ENCODE measurements at regions of chr5 and their contacts with region 1.

Region 1: DNA sequence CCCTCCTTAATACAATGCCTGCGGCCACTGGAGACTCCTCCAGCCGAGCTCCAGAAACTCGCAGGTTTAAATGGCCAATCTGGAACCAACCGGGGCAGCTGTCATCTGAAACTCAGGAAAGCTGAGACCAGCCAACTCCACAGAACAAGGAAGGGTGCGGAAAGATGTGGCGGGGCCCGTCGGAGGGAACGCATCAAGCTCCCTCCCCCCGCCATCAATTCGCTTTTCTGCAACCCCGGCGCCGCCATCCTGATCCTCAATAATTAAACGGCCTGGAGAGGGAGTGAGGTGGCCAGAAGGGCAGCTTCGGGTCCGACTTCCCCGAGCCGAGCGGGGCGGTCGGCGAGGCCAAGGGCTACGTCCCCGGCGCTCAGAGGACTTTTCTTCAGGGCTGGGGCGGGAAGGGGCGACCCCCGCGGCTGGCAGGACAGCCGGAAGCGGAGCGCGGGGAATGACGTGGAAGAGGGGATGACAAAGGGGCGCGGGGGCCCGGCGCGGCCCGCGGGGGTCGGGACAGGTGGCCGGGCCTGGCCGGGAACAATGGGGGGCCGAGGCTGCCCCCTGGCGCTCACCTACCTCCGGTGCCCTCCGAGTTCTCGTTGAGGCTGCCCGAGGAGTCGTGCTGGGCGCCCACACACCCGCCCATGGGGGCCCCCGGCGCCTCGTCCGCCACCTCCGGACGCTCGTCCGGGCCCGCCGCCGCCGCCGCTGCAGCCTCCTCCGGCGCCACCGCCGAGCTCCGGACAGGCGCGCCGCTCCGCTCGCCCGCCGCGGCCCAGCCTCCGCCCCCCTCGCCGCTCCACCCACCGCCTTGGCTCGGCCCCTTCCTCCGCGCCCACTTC is at the start of gene UBTD2:
- DNase-seq: peak; percentile 84
- ATAC-seq: peak; percentile 85
- H3K4me3 Mint-ChIP-seq: peak within 1 kb of the TSS; percentile 85
- H3K27ac Mint-ChIP-seq: peak within 1 kb of the TSS; percentile 87
- H3K4me1 Mint-ChIP-seq: peaks cover 16% of the 10 kb centered on the region
- H3K27me3 Mint-ChIP-seq: no peaks in the 10 kb centered on the region
- total RNA-seq, gene UBTD2: 6.0 to 6.1 TPM

Region 2: DNA sequence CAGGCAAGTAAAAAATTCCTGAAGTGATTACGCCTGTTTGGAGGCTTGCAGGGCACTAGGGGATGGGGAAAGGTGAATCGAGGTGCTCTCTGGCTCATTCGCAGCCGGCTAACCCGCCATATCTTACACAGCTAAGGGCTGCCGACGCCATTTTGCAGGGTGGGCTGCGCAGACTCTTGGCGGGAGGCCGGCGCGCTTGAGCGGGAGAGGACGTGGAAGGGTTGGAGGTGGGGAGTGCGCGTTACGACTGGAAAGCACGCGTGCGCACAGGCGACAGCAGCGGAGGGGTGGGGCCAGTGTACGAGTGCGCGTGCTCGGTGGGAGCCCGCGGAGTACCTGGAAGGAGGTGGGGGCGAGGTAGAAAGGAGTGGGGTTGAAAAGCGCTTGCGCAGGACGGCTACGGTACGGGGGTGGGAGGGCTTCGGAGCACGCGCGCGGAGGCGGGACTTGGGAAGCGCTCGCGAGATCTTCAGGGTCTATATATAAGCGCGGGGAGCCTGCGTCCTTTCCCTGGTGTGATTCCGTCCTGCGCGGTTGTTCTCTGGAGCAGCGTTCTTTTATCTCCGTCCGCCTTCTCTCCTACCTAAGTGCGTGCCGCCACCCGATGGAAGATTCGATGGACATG is 895.8 kb before region 1 on chr5 and contains the start of gene NPM1:
- CTCF ChIA-PET with region 1: no interaction called
- POLR2A ChIA-PET with region 1: no interaction called
- intact Hi-C with region 1: loop called in 1 of 2 experiments (anchors 2 kb)
- DNase-seq: peak; percentile 99
- ATAC-seq: peak; percentile 83
- H3K4me3 Mint-ChIP-seq: peak within 1 kb of the TSS; percentile 88
- H3K27ac Mint-ChIP-seq: peak within 1 kb of the TSS; percentile 99
- H3K4me1 Mint-ChIP-seq: peaks cover 37% of the 10 kb centered on the region
- H3K27me3 Mint-ChIP-seq: no peaks in the 10 kb centered on the region
- total RNA-seq, gene NPM1: 3,156 to 3,905 TPM

Region 3: DNA sequence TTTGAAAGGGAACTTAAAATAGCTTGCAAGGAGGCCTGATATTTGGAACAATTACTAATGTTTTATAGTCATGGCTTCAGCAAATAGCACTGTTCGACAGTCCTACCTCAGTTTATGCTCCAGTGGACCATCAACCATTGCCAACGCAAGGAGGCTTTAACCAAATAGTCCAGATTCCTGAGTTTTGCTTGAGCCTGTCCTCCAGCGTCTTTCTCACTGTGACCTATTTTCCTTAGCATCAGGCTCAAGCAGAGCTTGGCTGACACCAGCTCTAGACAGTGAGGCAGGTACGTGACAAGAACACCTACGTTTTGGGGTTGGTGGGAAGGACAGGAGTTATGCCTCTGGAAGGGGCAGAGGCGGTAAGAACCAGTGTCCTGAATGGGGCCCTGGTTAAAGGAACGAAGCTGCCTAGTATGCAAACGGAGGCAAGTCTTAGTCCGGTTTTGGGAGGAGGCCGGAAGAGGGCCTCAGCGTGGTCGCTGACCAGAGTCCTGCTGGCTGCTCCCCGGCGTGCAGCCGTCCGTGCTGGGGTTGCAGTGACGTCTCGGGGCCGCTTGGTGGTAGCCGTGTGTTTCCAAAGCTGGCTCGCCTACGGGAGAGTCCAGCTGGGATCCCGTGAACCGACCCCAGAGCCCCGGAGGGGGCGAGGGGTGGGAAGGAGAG is 864.8 kb before region 1 on chr5:
- CTCF ChIA-PET with region 1: no interaction called
- POLR2A ChIA-PET with region 1: no interaction called
- intact Hi-C with region 1: loop called in 1 of 2 experiments (anchors 10 kb)
- DNase-seq: peak; percentile 80
- ATAC-seq: peak; percentile 63
- H3K4me3 Mint-ChIP-seq: peak overlapping the region; percentile 58
- H3K27ac Mint-ChIP-seq: no peak overlapping the region
- H3K4me1 Mint-ChIP-seq: peaks cover 12% of the 10 kb centered on the region
- H3K27me3 Mint-ChIP-seq: peaks cover 22% of the 10 kb centered on the region

Region 4: GRCh38 chr5:171961117-171961516 is 322.1 kb before region 1 on chr5:
- CTCF ChIA-PET with region 1: no interaction called
- POLR2A ChIA-PET with region 1: no interaction called
- intact Hi-C with region 1: loop called in 1 of 2 experiments (anchors 5 kb)
- DNase-seq: peak; percentile 65
- ATAC-seq: peak; percentile 64
- H3K4me3 Mint-ChIP-seq: no peak overlapping the region
- H3K27ac Mint-ChIP-seq: peak overlapping the region; percentile 72
- H3K4me1 Mint-ChIP-seq: peaks cover 92% of the 10 kb centered on the region
- H3K27me3 Mint-ChIP-seq: no peaks in the 10 kb centered on the region

Region 5: GRCh38 chr5:172006321-172007174 is 276.7 kb before region 1 on chr5 and contains the start of gene FBXW11:
- CTCF ChIA-PET with region 1: no interaction called
- POLR2A ChIA-PET with region 1: interaction called, 5 read pairs
- intact Hi-C with region 1: loop called (anchors 1 to 5 kb)
- DNase-seq: peak; percentile 97
- ATAC-seq: peak; percentile 85
- H3K4me3 Mint-ChIP-seq: peak within 1 kb of the TSS; percentile 92
- H3K27ac Mint-ChIP-seq: peak within 1 kb of the TSS; percentile 98
- H3K4me1 Mint-ChIP-seq: peaks cover 43% of the 10 kb centered on the region
- H3K27me3 Mint-ChIP-seq: no peaks in the 10 kb centered on the region
- total RNA-seq, gene FBXW11: 33.8 to 39.5 TPM

Region 6: DNA sequence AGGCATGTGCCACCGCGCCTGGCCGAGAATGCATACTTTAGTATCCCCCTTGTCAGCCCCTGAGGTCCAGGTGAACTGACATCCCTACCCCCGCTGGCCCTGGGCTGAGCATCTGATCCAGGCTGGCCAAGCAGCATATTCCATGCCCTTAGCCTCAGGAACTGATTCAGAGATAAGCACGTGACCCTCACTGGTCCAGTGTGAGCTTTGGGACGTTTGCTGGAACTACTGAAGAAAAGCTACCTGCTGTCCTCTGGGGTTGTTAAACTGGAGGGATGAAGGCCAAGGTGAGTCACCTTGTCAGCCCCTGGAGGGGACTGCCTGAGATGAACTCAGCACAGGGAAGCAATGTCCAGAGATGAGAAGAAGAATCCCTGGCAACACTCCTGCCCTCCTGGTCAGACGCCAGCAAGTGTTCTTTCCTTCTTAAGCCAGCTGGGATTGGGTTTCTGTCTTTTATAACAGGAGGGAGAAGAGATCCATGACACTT is 217.7 kb before region 1 on chr5:
- CTCF ChIA-PET with region 1: interaction called, 5 read pairs
- POLR2A ChIA-PET with region 1: interaction called, 3 read pairs
- intact Hi-C with region 1: loop called in 1 of 2 experiments (anchors 5 kb)
- DNase-seq: no peak
- ATAC-seq: no peak
- H3K4me3 Mint-ChIP-seq: no peak overlapping the region
- H3K27ac Mint-ChIP-seq: peak overlapping the region; percentile 51
- H3K4me1 Mint-ChIP-seq: peaks cover 57% of the 10 kb centered on the region
- H3K27me3 Mint-ChIP-seq: no peaks in the 10 kb centered on the region